CD14-positive monocyte (primary cell): ENCODE measurements at regions of chr1 and their contacts with region 1.

Region 1: GRCh38 chr1:156076501-156077429 is 5.5 kb downstream of the MEX3A start:
- DNase-seq: no peak
- H3K4me3 ChIP-seq: peak overlapping the region in 1 of 3 experiments; percentile 63
- H3K4me3 Mint-ChIP-seq: peak overlapping the region; percentile 43 to 73
- H3K27ac ChIP-seq: no peak overlapping the region
- H3K27ac Mint-ChIP-seq: no peak overlapping the region
- H3K4me1 ChIP-seq: peaks cover 12 to 19% of the 10 kb centered on the region in 2 donors
- H3K4me1 Mint-ChIP-seq: peaks cover 21% of the 10 kb centered on the region
- H3K27me3 ChIP-seq: peaks cover 24 to 70% of the 10 kb centered on the region in 2 donors
- H3K27me3 Mint-ChIP-seq: peaks cover 66 to 79% (median 70%) of the 10 kb centered on the region in 3 donors
- CTCF ChIP-seq: no peak

Region 2: DNA sequence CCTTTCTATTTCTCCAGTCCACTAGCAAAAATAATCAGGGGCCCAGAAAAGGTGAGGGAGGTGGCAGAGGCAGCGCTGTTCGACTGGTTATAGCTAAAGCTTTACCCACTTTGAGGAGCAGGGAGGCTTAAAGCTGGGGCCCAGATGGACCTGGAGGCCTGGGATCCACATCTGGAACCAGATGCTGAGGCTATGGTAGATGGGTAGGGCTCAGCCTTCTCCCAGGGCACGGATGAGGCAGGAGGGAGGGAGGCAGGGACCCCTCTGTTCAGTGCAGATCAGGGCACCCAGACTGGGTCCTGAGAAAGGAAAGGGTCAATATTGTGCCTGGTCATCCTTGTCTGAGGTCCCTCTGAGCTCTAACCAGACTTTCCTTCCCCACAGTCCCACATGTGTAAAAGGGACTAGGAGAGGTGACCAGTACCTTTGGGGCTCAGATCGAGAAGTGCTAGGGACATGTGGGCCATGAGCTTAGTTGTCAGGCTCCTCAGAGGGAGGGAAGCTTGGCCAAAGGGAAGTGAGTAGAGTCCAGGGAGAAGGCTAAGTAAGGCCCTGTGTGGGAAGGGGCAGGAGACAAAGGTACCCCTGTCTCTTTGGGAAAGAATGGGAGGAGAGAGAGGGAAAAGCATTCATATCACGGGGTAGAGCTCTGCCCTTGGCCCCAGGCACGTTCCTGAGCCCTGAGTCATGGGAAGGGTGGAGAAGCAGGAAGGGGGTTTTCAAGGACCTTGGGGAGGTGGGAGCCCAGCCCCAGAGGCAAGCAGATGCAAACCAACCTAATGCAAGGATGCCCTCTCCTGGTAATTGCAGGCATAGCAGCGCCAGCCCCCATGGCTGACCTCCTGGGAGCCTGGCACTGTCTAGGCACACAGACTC is 53.2 kb after region 1 on chr1:
- intact Hi-C with region 1: no loop called
- DNase-seq: peak; percentile 75 to 92 (median 86)
- H3K4me3 ChIP-seq: no peak overlapping the region
- H3K4me3 Mint-ChIP-seq: peak overlapping the region in 1 of 2 donors; percentile 82
- H3K27ac ChIP-seq: no peak overlapping the region
- H3K27ac Mint-ChIP-seq: peak overlapping the region in 6 of 7 donors; percentile 23 to 86 (median 78)
- H3K4me1 ChIP-seq: peaks cover 42 to 46% of the 10 kb centered on the region in 2 donors
- H3K4me1 Mint-ChIP-seq: peaks cover 50% of the 10 kb centered on the region
- H3K27me3 ChIP-seq: peaks cover 30 to 89% of the 10 kb centered on the region in 2 donors
- H3K27me3 Mint-ChIP-seq: peaks cover 80 to 95% (median 93%) of the 10 kb centered on the region in 3 donors
- CTCF ChIP-seq: peak; percentile 97

Region 3: GRCh38 chr1:156319664-156320063 is 242.9 kb after region 1 on chr1:
- intact Hi-C with region 1: loop called in 1 of 2 experiments (anchors 10 kb)
- DNase-seq: peak in 2 of 3 donors; percentile 7 to 15
- H3K4me3 ChIP-seq: no peak overlapping the region
- H3K4me3 Mint-ChIP-seq: no peak overlapping the region
- H3K27ac ChIP-seq: no peak overlapping the region
- H3K27ac Mint-ChIP-seq: no peak overlapping the region
- H3K4me1 ChIP-seq: no peaks in the 10 kb centered on the region
- H3K4me1 Mint-ChIP-seq: no peaks in the 10 kb centered on the region
- H3K27me3 ChIP-seq: no peaks in the 10 kb centered on the region
- H3K27me3 Mint-ChIP-seq: peaks cover 0 to 1% (median 0%) of the 10 kb centered on the region in 3 donors
- CTCF ChIP-seq: peak; percentile 71